Activated CD4-positive, alpha-beta memory T cell treated with anti-CD3 and anti-CD28 coated beads for 36 hours (primary cell): ENCODE measurements at regions of chr11 and their contacts with region 1.

Region 1: GRCh38 chr11:87290304-87290922 is 252.7 kb downstream of the TMEM135 start:
- DNase-seq: no peak
- H3K4me3 Mint-ChIP-seq: no peak overlapping the region
- H3K27ac Mint-ChIP-seq: no peak overlapping the region
- H3K4me1 Mint-ChIP-seq: no peaks in the 10 kb centered on the region
- H3K27me3 Mint-ChIP-seq: no peaks in the 10 kb centered on the region

Region 2: GRCh38 chr11:86978756-86979608 is 311.4 kb before region 1 on chr11:
- CTCF ChIA-PET with region 1: interaction called, 11 read pairs
- POLR2A ChIA-PET with region 1: no interaction called
- intact Hi-C with region 1: loop called (anchors 1 kb)
- DNase-seq: no peak
- H3K4me3 Mint-ChIP-seq: no peak overlapping the region
- H3K27ac Mint-ChIP-seq: no peak overlapping the region
- H3K4me1 Mint-ChIP-seq: no peaks in the 10 kb centered on the region
- H3K27me3 Mint-ChIP-seq: peaks cover 6% of the 10 kb centered on the region

Region 3: GRCh38 chr11:86990515-86990914 is 299.9 kb before region 1 on chr11:
- CTCF ChIA-PET with region 1: interaction called, 36 read pairs
- POLR2A ChIA-PET with region 1: no interaction called
- intact Hi-C with region 1: loop called (anchors 1 kb)
- DNase-seq: no peak
- H3K4me3 Mint-ChIP-seq: no peak overlapping the region
- H3K27ac Mint-ChIP-seq: no peak overlapping the region
- H3K4me1 Mint-ChIP-seq: no peaks in the 10 kb centered on the region
- H3K27me3 Mint-ChIP-seq: peaks cover 2% of the 10 kb centered on the region

Region 4: GRCh38 chr11:87368858-87369480 is 78.6 kb after region 1 on chr11:
- CTCF ChIA-PET with region 1: no interaction called
- POLR2A ChIA-PET with region 1: no interaction called
- intact Hi-C with region 1: no loop called
- DNase-seq: no peak
- H3K4me3 Mint-ChIP-seq: no peak overlapping the region
- H3K27ac Mint-ChIP-seq: no peak overlapping the region
- H3K4me1 Mint-ChIP-seq: no peaks in the 10 kb centered on the region
- H3K27me3 Mint-ChIP-seq: peaks cover 9% of the 10 kb centered on the region